Vagina (tissue), 2 donors: ENCODE measurements at regions of chr15 and their contacts with region 1.

Region 1: GRCh38 chr15:48541341-48542278 is 103.9 kb downstream of the FBN1 start:
- DNase-seq: no peak
- H3K4me3 ChIP-seq: no peak overlapping the region
- H3K27ac ChIP-seq: peak overlapping the region; percentile 59
- H3K4me1 ChIP-seq: peaks cover 33% of the 10 kb centered on the region
- H3K27me3 ChIP-seq: no peaks in the 10 kb centered on the region
- CTCF ChIP-seq: no peak
- POLR2A ChIP-seq: no peak

Region 2: DNA sequence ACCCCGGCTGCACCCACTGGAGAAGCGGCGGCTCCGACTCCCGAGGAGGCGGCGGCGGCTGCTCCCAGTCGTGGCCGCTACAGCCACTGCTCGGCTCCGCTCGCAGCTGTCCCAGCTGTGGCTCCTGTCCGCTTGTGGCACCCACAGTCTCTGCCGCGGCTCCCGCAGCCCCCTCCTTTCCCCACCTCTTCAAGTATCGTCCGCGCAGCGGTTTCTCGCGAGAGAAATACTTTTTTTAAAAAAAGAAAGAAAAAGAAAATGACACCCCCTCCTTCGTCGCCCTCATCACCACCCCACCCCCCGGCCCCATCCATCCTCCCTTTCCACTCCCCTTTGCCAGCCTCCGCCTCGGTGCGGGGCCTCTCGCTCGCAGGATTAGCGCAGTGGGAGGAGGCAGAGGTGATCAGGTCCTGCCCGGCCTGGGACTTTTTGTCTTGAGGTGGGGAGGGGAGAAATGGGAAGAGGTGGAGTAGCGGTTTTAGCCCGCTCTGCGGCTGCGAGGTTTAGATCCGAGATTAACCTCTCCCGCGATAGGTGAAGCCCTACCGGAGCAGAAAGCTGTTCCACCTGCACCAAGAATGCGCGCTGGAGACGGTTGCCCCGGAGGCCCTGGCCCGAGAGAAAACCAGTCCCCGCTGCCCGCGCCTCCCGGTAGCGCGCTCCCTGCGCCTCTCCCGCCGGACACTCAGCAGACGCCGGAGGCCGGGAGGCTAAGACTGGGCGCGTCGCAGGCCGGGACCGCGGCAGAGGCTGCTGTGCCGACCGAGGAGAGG is 104.1 kb after region 1 on chr15 and contains the start of gene FBN1:
- intact Hi-C with region 1: loop called (anchors 10 kb)
- DNase-seq: no peak
- H3K4me3 ChIP-seq: peak within 1 kb of the TSS; percentile 61 to 84
- H3K27ac ChIP-seq: peak within 1 kb of the TSS; percentile 93
- H3K4me1 ChIP-seq: peaks cover 18% of the 10 kb centered on the region
- H3K27me3 ChIP-seq: no peaks in the 10 kb centered on the region
- CTCF ChIP-seq: no peak
- POLR2A ChIP-seq: peak in 1 of 2 donors; percentile 89
- total RNA-seq, gene FBN1: 102 TPM

Region 3: DNA sequence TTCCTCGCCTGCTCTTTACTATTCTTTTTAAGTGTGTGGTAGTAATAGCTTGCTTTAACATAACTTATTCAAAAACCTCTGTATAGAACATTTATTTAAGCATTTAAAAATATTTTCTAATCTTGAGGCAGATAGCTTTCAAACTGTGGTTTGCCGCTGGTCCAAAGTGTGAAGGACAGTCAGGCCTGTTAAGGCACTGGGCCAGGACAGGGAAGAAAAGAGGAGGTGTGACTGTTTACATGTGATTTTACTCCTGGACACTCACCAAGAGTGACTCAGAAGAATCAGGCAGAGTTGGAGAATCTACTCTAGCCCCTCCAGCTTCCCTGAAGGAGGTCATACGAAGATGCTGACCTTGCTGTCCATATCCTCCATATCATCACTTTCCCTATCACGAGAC is 224.6 kb after region 1 on chr15:
- intact Hi-C with region 1: no loop called
- DNase-seq: no peak
- H3K4me3 ChIP-seq: no peak overlapping the region
- H3K27ac ChIP-seq: no peak overlapping the region
- H3K4me1 ChIP-seq: no peaks in the 10 kb centered on the region
- H3K27me3 ChIP-seq: no peaks in the 10 kb centered on the region
- CTCF ChIP-seq: no peak
- POLR2A ChIP-seq: no peak